ENCODE measurements at regions of chr1 and their contacts with region 1.

Region 1: DNA sequence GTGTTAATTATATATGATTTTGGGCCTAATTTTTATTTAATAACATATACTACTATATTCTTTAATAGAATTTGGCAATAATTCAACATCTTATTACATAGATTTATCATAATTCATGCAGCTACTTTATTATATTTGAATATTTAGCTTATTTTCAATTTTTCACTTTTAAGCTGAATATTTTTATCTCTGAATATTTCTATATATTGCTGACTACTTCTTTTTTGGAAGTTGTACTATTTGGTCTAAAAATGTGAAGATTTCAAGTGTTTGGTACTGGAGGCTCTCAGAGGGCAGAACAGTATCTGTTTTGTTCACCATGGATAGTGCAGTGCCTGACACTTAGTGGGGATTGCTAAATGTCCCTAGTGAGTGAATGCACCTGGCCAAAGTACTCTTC is 389.5 kb downstream of the RYR2 start:
- DNase-seq: no peak
- H3K4me3 ChIP-seq: no peak overlapping the region
- H3K27ac ChIP-seq: no peak overlapping the region
- H3K4me1 ChIP-seq: no peaks in the 10 kb centered on the region
- H3K27me3 ChIP-seq: no peaks in the 10 kb centered on the region
- CTCF ChIP-seq: no peak

Region 2: GRCh38 chr1:236774926-236775325 is 656.5 kb before region 1 on chr1:
- CTCF ChIA-PET with region 1: no interaction called
- POLR2A ChIA-PET with region 1: no interaction called
- intact Hi-C with region 1: loop called (anchors 5 kb)
- DNase-seq: no peak
- H3K4me3 ChIP-seq: no peak overlapping the region
- H3K27ac ChIP-seq: no peak overlapping the region
- H3K4me1 ChIP-seq: no peaks in the 10 kb centered on the region
- H3K27me3 ChIP-seq: peaks cover 46% of the 10 kb centered on the region
- CTCF ChIP-seq: no peak; the same call in 1 of the 2 replicates

Measured in PC-9 (cell line).